ENCODE measurements at regions of chr4 and their contacts with region 1.

Region 1: GRCh38 chr4:674172-675035 is at the starts of genes ATP5ME and MYL5:
- DNase-seq: peak; percentile 98
- ATAC-seq: peak; percentile 95
- H3K4me3 Mint-ChIP-seq: peak within 1 kb of the TSS; percentile 80
- H3K27ac Mint-ChIP-seq: peak within 1 kb of the TSS; percentile 84
- H3K4me1 Mint-ChIP-seq: peaks cover 13% of the 10 kb centered on the region
- H3K27me3 Mint-ChIP-seq: no peaks in the 10 kb centered on the region
- total RNA-seq, gene ATP5ME: 147 to 210 TPM
- total RNA-seq, gene MYL5: 13.7 to 16.4 TPM

Region 2: DNA sequence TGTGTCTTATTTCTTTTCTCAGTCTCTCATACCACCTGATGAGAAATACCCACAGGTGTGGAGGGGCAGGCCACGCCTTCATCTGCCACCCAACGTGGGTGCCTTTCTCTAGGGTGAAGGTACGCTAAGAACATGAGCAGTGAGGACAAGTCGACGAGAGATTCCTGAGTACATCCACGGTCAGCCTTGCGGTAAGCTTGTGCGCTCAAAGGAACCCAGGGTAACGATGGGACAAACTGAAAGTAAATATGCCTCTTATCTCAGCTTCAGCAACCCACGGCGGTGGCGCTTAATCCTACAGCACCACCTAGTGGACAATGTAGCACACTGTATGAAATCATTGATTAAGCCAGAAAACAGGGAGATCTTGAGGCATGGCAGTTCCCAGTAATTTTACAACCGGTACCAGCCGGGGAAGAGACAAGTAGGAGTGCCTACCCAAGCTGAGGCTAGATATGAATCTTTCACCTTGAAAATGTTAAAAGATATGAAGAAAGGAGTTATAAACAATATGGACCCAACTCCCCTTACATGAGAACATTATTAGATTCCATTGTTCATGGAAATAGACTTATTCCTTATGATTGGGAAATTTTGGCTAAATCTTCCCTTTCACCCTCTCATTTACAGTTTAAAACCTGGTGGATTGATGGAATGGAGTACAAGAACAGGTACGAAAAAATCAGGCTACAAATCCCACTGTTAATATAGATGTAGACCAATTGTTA is 432.1 kb before region 1 on chr4:
- CTCF ChIA-PET with region 1: no interaction called
- POLR2A ChIA-PET with region 1: no interaction called
- intact Hi-C with region 1: loop called (anchors 1 to 5 kb)
- DNase-seq: peak; percentile 81
- ATAC-seq: peak; percentile 96
- H3K4me3 Mint-ChIP-seq: peak overlapping the region; percentile 76
- H3K27ac Mint-ChIP-seq: peak overlapping the region; percentile 86
- H3K4me1 Mint-ChIP-seq: peaks cover 7% of the 10 kb centered on the region
- H3K27me3 Mint-ChIP-seq: no peaks in the 10 kb centered on the region

Region 3: DNA sequence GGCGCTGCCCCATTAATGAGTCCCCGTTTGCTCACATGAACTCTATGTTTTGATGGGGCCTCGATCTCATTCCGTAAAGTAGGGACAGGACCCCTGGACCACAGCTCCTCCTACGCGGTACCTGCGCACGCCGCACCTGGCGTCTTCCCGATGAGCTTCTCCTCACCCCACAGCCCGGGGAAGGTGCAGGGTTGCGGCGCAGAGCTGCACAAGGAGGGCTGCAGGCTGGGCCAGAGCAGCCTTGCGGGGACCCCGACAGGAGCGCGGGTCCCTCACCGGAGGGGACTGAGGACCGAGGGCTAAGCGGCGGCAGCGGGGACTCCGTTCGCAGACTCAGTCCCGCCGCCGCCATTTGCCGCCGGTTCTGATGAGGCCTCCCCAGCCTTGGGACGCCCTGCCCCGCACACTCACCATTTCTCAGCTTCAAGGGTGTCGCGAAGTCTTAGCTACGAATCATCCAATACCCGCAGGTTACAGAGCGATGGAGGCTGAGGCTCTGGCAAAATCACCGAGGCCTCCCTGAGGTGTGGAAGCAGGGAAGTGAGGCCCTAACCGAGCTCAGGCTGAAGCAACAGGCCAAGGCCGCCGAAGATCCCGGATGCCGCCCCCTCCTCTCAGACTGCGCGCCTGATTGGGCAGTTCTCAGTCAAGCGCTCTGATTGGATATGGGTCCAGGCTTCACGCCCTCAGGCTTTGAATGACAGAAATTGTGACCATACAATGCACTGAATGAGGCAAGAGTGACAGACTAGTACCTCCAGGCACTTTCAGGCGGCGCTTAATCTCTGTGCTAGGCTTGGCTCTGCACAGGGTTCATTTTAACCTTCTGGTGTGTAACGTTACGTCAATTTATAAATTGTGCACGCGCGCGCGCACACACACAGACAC is 200.6 kb before region 1 on chr4:
- CTCF ChIA-PET with region 1: no interaction called
- POLR2A ChIA-PET with region 1: no interaction called
- intact Hi-C with region 1: loop called in 1 of 2 experiments (anchors 1 kb)
- DNase-seq: peak; percentile 96
- ATAC-seq: peak; percentile 99
- H3K4me3 Mint-ChIP-seq: peak overlapping the region; percentile 98
- H3K27ac Mint-ChIP-seq: peak overlapping the region; percentile 100
- H3K4me1 Mint-ChIP-seq: peaks cover 38% of the 10 kb centered on the region
- H3K27me3 Mint-ChIP-seq: no peaks in the 10 kb centered on the region

Region 4: GRCh38 chr4:504076-504475 is 170.3 kb before region 1 on chr4:
- CTCF ChIA-PET with region 1: no interaction called
- POLR2A ChIA-PET with region 1: no interaction called
- intact Hi-C with region 1: loop called (anchors 1 to 10 kb)
- DNase-seq: no peak
- ATAC-seq: no peak
- H3K4me3 Mint-ChIP-seq: no peak overlapping the region
- H3K27ac Mint-ChIP-seq: no peak overlapping the region
- H3K4me1 Mint-ChIP-seq: peaks cover 36% of the 10 kb centered on the region
- H3K27me3 Mint-ChIP-seq: no peaks in the 10 kb centered on the region

Region 5: GRCh38 chr4:610411-611261 is 63.8 kb before region 1 on chr4:
- CTCF ChIA-PET with region 1: no interaction called
- POLR2A ChIA-PET with region 1: no interaction called
- intact Hi-C with region 1: no loop called
- DNase-seq: no peak
- ATAC-seq: no peak
- H3K4me3 Mint-ChIP-seq: no peak overlapping the region
- H3K27ac Mint-ChIP-seq: no peak overlapping the region
- H3K4me1 Mint-ChIP-seq: no peaks in the 10 kb centered on the region
- H3K27me3 Mint-ChIP-seq: peaks cover 18% of the 10 kb centered on the region

Region 6: DNA sequence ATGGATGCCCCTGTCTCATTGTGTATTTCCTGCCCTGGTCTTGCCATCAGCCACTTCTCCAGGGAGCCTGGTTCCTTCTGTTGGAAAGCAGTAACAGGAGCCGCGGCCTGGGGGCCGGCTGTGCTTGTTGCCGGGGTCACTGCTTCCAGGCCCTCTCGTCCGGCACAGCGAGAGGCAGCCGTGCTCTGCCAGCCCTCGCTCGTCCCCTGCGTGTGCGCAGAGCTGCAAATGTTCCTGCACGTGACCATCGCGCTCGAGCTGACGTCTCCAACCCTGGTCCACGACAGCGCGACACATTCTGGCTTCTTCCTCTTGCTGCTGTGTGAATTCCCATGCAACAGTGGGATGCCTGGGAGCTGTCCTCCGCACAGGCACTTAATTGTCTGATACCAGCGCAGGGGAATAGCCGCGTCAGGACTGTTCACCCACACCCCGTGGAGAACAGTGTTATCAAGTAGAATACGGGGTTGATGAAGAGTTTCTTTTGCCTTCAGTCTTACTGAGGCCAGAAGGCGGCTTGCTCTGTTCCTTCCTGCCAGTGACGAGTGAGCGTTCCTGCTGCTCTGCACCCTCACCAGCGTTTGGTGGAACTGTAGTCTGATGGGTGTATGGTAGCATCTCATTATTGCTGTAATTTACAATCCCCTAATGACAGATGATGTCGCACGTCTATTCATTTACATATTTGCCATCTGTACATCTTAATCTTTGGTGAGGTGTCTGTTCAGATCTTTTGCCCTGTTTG is 36.7 kb before region 1 on chr4:
- CTCF ChIA-PET with region 1: no interaction called
- POLR2A ChIA-PET with region 1: no interaction called
- intact Hi-C with region 1: no loop called
- DNase-seq: no peak
- ATAC-seq: no peak
- H3K4me3 Mint-ChIP-seq: no peak overlapping the region
- H3K27ac Mint-ChIP-seq: no peak overlapping the region
- H3K4me1 Mint-ChIP-seq: no peaks in the 10 kb centered on the region
- H3K27me3 Mint-ChIP-seq: peaks cover 15% of the 10 kb centered on the region

Region 7: GRCh38 chr4:663438-664428 is 10.7 kb before region 1 on chr4:
- CTCF ChIA-PET with region 1: no interaction called
- POLR2A ChIA-PET with region 1: interaction called, 8 read pairs
- intact Hi-C with region 1: loop called in 1 of 2 experiments (anchors 1 kb)
- DNase-seq: peak; percentile 85
- ATAC-seq: peak; percentile 70
- H3K4me3 Mint-ChIP-seq: peak overlapping the region; percentile 80
- H3K27ac Mint-ChIP-seq: peak overlapping the region; percentile 84
- H3K4me1 Mint-ChIP-seq: peaks cover 14% of the 10 kb centered on the region
- H3K27me3 Mint-ChIP-seq: no peaks in the 10 kb centered on the region

Region 8: GRCh38 chr4:931960-932712 is 257.7 kb after region 1 on chr4 and contains the starts of genes GAK and TMEM175:
- CTCF ChIA-PET with region 1: no interaction called
- POLR2A ChIA-PET with region 1: no interaction called
- intact Hi-C with region 1: loop called in 1 of 2 experiments (anchors 1 kb)
- DNase-seq: peak; percentile 98
- ATAC-seq: peak; percentile 95
- H3K4me3 Mint-ChIP-seq: peak within 1 kb of the TSS; percentile 87
- H3K27ac Mint-ChIP-seq: peak within 1 kb of the TSS; percentile 89
- H3K4me1 Mint-ChIP-seq: peaks cover 29% of the 10 kb centered on the region
- H3K27me3 Mint-ChIP-seq: no peaks in the 10 kb centered on the region
- total RNA-seq, gene GAK: 82.9 to 88.0 TPM
- total RNA-seq, gene TMEM175: 15.2 to 17.3 TPM

Measured in activated CD4-positive, alpha-beta T cell treated with anti-CD3 and anti-CD28 coated beads for 36 hours (primary cell).